Esophagus muscularis mucosa (tissue), 4 donors: ENCODE measurements at regions of chr5 and their contacts with region 1.

Region 1: GRCh38 chr5:88889189-88890069 is 6.4 kb upstream of the MEF2C start:
- DNase-seq: no peak
- H3K4me3 ChIP-seq: peak overlapping the region; percentile 62 to 72 (median 70)
- H3K27ac ChIP-seq: peak overlapping the region; percentile 87 to 96 (median 91)
- H3K4me1 ChIP-seq: peaks cover 15 to 57% (median 55%) of the 10 kb centered on the region in 4 donors
- H3K27me3 ChIP-seq: no peaks in the 10 kb centered on the region
- CTCF ChIP-seq: no peak
- EP300 ChIP-seq: no peak
- POLR2A ChIP-seq: no peak

Region 2: DNA sequence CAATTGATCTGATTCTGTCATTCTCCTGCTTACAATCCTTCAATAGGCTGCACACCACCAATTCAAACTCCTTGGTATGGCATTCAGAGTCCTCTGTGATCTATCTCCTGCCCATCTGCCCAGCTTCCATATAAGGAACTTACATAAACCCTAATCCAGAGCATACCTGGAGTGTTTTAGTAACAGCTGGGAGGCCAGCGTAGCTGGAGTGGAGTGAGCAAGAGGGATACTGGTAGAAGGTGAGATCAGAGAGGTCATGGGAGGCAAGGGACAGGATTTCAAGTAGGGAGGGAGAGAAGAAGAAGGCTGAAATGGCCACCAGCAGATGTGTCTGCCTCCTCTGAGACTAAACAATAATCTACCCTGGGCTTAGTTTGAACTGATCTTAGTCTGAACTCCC is 295.0 kb before region 1 on chr5:
- intact Hi-C with region 1: no loop called
- DNase-seq: no peak
- H3K4me3 ChIP-seq: no peak overlapping the region
- H3K27ac ChIP-seq: no peak overlapping the region
- H3K4me1 ChIP-seq: no peaks in the 10 kb centered on the region
- H3K27me3 ChIP-seq: no peaks in the 10 kb centered on the region
- CTCF ChIP-seq: no peak
- EP300 ChIP-seq: no peak
- POLR2A ChIP-seq: no peak

Region 3: DNA sequence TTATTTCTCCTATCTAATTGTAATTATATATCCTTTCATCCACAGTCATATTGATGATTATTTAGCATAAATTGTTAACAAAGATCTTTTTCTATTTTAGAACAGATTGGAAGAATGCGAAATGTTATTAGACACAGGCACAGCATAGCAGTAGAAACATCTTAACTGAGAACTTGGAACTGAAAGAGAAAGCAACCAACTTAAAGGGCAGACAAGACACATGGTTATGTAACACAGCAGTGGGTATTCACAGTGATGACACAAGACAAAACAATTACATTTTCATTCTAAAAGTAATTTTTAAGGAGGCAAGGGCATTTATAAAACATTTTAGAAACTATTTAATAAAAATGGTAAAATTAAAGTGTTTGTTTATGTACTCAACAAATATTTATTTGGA is 51.3 kb after region 1 on chr5:
- intact Hi-C with region 1: loop called (anchors 5 kb)
- DNase-seq: no peak
- H3K4me3 ChIP-seq: no peak overlapping the region
- H3K27ac ChIP-seq: peak overlapping the region in 1 of 4 donors; percentile 70
- H3K4me1 ChIP-seq: peaks cover 4 to 35% (median 28%) of the 10 kb centered on the region in 4 donors
- H3K27me3 ChIP-seq: no peaks in the 10 kb centered on the region
- CTCF ChIP-seq: no peak
- EP300 ChIP-seq: no peak
- POLR2A ChIP-seq: no peak